CD8-positive, alpha-beta T cell (primary cell): ENCODE measurements at regions of chr3 and their contacts with region 1.

Region 1: GRCh38 chr3:48685602-48686511 is at the start of gene NCKIPSD:
- DNase-seq: peak; percentile 81 to 97 (median 91)
- ATAC-seq: peak; percentile 92
- H3K4me3 ChIP-seq: peak within 1 kb of the TSS; percentile 63 to 85
- H3K4me3 Mint-ChIP-seq: peak within 1 kb of the TSS; percentile 93
- H3K27ac ChIP-seq: peak within 1 kb of the TSS; percentile 58 to 82
- H3K27ac Mint-ChIP-seq: peak within 1 kb of the TSS; percentile 91
- H3K4me1 ChIP-seq: peaks cover 18% of the 10 kb centered on the region
- H3K4me1 Mint-ChIP-seq: peaks cover 22% of the 10 kb centered on the region
- H3K27me3 ChIP-seq: no peaks in the 10 kb centered on the region
- H3K27me3 Mint-ChIP-seq: no peaks in the 10 kb centered on the region
- CTCF ChIP-seq: peak; percentile 93
- total RNA-seq, gene NCKIPSD: 7.7 to 8.1 TPM

Region 2: DNA sequence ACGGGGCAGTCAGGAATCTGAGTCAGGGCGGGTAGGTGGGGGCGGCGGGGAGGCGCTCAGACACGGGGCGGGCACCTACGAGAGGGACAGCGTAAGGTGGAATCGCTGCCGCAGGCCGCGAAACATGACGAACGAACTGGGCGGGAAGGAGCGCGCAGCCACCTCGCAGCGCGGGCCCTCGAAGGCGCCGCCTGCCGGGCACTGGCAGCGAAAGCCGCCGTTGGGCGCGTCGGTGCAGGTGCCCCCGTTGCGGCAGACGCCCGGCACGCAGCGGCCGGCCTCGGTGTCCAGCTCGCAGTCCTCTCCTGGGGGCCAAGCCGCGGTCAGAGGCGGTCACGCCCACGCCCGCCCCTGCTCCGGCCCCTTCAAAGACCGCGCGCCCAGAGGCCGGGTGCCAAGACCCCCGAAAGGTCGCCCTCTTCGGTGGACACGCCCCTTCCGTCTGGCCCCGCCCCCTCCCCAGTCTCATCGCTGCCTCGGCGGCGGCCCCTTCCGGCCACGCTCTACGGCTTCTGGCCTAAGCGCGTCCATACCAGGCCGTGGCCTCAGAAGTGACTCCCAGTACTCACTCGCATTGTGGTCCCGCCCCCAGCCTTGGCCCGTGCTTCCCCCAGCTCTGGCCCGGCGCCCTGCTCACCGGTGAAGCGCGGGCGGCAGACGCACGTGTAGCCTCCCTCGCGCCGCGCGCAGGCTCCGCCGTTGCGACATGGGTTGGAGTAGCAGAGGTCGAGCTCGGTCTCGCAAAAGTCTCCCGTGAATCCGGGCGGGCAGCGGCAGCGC is 29.6 kb before region 1 on chr3:
- CTCF ChIA-PET with region 1: interaction called, 4 read pairs
- POLR2A ChIA-PET with region 1: interaction called, 3 read pairs
- intact Hi-C with region 1: loop called (anchors 1 kb)
- DNase-seq: peak; percentile 71 to 94 (median 83)
- ATAC-seq: peak; percentile 81
- H3K4me3 ChIP-seq: peak overlapping the region; percentile 53 to 83
- H3K4me3 Mint-ChIP-seq: peak overlapping the region; percentile 83
- H3K27ac ChIP-seq: peak overlapping the region; percentile 65 to 68
- H3K27ac Mint-ChIP-seq: peak overlapping the region; percentile 90
- H3K4me1 ChIP-seq: peaks cover 18% of the 10 kb centered on the region
- H3K4me1 Mint-ChIP-seq: peaks cover 18% of the 10 kb centered on the region
- H3K27me3 ChIP-seq: peaks cover 0 to 4% of the 10 kb centered on the region in 2 experiments
- H3K27me3 Mint-ChIP-seq: peaks cover 11% of the 10 kb centered on the region
- CTCF ChIP-seq: peak; percentile 60

Region 3: DNA sequence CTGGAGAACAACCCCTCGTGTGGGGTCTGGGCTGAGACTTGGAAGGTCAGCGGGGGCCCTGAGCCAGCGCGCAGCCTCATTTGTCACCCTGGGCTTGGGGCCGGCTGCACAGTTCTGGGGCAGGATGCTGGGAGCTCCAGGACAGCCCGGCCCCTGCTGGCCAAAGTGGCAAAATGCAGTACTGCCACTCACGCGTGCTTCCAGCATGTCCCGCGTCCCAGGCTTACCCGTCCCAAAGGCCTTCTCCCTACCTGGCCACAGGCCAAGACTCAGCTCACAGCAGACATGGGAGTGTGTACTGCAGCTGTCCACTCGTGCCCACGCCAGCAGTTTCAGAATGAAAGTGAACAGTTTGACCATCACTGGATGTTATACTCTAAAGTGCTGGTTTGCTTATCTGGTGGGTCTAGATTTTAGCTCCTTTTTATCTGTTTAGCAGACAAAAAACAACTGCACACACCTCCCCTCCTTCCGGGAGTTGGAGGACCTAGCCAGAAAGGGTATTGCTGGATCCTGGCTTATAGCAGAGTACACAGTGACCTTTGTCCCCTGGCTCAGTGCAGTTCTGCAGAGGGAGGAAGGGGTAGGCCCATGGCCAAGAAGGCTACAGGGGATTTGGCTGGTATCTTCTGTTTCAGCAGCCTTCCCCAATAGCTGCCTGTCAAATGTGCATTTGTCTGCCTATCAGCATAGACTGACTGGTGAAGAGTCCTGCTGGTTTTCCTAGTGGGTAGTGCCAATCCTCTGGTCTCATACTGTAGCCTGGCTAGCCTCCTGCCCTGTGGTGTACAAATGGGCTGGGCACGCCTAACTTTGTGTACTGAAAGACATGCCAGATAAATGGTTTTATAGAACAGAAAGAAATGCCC is 54.3 kb after region 1 on chr3:
- CTCF ChIA-PET with region 1: interaction called, 6 read pairs
- POLR2A ChIA-PET with region 1: no interaction called
- intact Hi-C with region 1: loop called in 1 of 2 experiments (anchors 1 kb)
- DNase-seq: peak; percentile 9 to 66 (median 54)
- ATAC-seq: peak; percentile 86
- H3K4me3 ChIP-seq: no peak overlapping the region
- H3K4me3 Mint-ChIP-seq: no peak overlapping the region
- H3K27ac ChIP-seq: no peak overlapping the region
- H3K27ac Mint-ChIP-seq: no peak overlapping the region
- H3K4me1 ChIP-seq: peaks cover 3% of the 10 kb centered on the region
- H3K4me1 Mint-ChIP-seq: peaks cover 2% of the 10 kb centered on the region
- H3K27me3 ChIP-seq: no peaks in the 10 kb centered on the region
- H3K27me3 Mint-ChIP-seq: no peaks in the 10 kb centered on the region
- CTCF ChIP-seq: peak; percentile 60

Region 4: GRCh38 chr3:48952510-48953118 is 266.8 kb after region 1 on chr3:
- CTCF ChIA-PET with region 1: interaction called, 4 read pairs
- POLR2A ChIA-PET with region 1: no interaction called
- intact Hi-C with region 1: loop called (anchors 1 to 2 kb)
- DNase-seq: peak; percentile 22 to 75 (median 61)
- ATAC-seq: peak; percentile 84
- H3K4me3 ChIP-seq: no peak overlapping the region
- H3K4me3 Mint-ChIP-seq: no peak overlapping the region
- H3K27ac ChIP-seq: peak overlapping the region in 1 of 2 experiments; percentile 28
- H3K27ac Mint-ChIP-seq: peak overlapping the region; percentile 7
- H3K4me1 ChIP-seq: no peaks in the 10 kb centered on the region
- H3K4me1 Mint-ChIP-seq: peaks cover 22% of the 10 kb centered on the region
- H3K27me3 ChIP-seq: no peaks in the 10 kb centered on the region
- H3K27me3 Mint-ChIP-seq: no peaks in the 10 kb centered on the region
- CTCF ChIP-seq: peak; percentile 50